Adrenal gland (tissue), 19 donors: ENCODE measurements at regions of chr3 and their contacts with region 1.

Region 1: GRCh38 chr3:53493963-53494791 is at the start of gene CACNA1D:
- DNase-seq: peak in 5 of 7 donors; percentile 18 to 53 (median 43)
- H3K4me3 ChIP-seq: peak within 1 kb of the TSS in 3 of 4 donors; percentile 40 to 74 (median 42)
- H3K27ac ChIP-seq: peak within 1 kb of the TSS in 4 of 5 donors; percentile 28 to 78 (median 73)
- H3K4me1 ChIP-seq: peaks cover 23 to 46% of the 10 kb centered on the region in 2 donors
- H3K27me3 ChIP-seq: no peaks in the 10 kb centered on the region
- CTCF ChIP-seq: no peak
- POLR2A ChIP-seq: no peak
- total RNA-seq, gene CACNA1D: 37.2 to 111 (median 83.1) TPM

Region 2: DNA sequence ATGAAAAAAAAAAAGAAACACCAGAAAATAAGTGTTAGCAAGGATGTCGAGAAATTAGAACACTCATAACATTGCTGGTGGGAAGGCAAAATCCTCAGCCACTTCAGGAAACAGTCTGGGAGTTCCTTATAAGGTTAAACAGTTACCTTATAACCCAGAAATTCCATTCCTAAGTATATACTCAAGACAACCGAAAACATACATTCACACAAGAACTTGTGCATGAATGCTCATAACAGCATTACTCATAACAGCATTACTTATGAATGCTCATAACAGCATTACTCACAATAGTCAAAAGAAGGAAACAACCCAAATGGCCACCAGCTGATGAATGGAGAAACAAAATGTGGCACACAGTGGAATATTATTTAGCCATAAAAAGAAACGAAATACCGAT is 112.1 kb before region 1 on chr3:
- intact Hi-C with region 1: loop called in 1 of 2 experiments (anchors 10 kb)
- DNase-seq: no peak
- H3K4me3 ChIP-seq: no peak overlapping the region
- H3K27ac ChIP-seq: no peak overlapping the region
- H3K4me1 ChIP-seq: no peaks in the 10 kb centered on the region
- H3K27me3 ChIP-seq: no peaks in the 10 kb centered on the region
- CTCF ChIP-seq: no peak
- POLR2A ChIP-seq: no peak